ENCODE measurements at regions of chr1 and their contacts with region 1.

Region 1: DNA sequence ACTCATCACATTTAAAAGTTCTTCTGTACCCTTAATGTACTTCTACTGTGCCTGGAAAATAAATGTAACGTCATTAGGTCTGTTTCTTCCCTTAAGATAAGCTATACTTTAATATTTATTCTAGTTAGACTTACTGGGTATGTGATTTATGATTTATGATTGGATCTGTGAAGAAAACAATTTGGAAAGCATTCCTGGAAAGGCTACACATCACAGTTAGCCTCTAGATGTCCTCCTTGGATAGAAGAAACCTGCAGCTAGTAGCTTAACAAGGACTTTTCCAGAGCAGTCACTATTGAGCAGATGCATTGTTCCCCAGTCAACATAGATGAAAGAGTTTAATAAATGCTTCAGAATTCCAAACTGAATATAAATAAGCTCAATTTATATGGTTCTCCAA is 22.2 kb upstream of the ABL2 start:
- DNase-seq: no peak
- H3K4me3 ChIP-seq: no peak overlapping the region
- CTCF ChIP-seq: peak; percentile 35

Region 2: GRCh38 chr1:179263121-179263520 is 11.4 kb after region 1 on chr1:
- CTCF ChIA-PET with region 1: interaction called, 14 read pairs
- POLR2A ChIA-PET with region 1: no interaction called
- DNase-seq: no peak
- H3K4me3 ChIP-seq: no peak overlapping the region
- CTCF ChIP-seq: no peak

Region 3: GRCh38 chr1:179353546-179353945 is 101.9 kb after region 1 on chr1:
- CTCF ChIA-PET with region 1: interaction called, 12 read pairs
- POLR2A ChIA-PET with region 1: no interaction called
- DNase-seq: peak; percentile 23
- H3K4me3 ChIP-seq: no peak overlapping the region
- CTCF ChIP-seq: no peak

Region 4: GRCh38 chr1:179447489-179447888 is 195.8 kb after region 1 on chr1:
- CTCF ChIA-PET with region 1: interaction called, 13 read pairs
- POLR2A ChIA-PET with region 1: no interaction called
- DNase-seq: no peak
- H3K4me3 ChIP-seq: no peak overlapping the region
- CTCF ChIP-seq: peak; percentile 10

Measured in AG04449 (cell line).